ENCODE measurements at regions of chr15 and their contacts with region 1.

Region 1: GRCh38 chr15:67076147-67076843 is 10.9 kb downstream of the SMAD3 start:
- DNase-seq: peak; percentile 95
- H3K4me3 ChIP-seq: no peak overlapping the region
- H3K27ac ChIP-seq: peak overlapping the region; percentile 76
- H3K4me1 ChIP-seq: peaks cover 72% of the 10 kb centered on the region
- H3K27me3 ChIP-seq: no peaks in the 10 kb centered on the region
- CTCF ChIP-seq: no peak
- POLR2A ChIP-seq: no peak

Region 2: DNA sequence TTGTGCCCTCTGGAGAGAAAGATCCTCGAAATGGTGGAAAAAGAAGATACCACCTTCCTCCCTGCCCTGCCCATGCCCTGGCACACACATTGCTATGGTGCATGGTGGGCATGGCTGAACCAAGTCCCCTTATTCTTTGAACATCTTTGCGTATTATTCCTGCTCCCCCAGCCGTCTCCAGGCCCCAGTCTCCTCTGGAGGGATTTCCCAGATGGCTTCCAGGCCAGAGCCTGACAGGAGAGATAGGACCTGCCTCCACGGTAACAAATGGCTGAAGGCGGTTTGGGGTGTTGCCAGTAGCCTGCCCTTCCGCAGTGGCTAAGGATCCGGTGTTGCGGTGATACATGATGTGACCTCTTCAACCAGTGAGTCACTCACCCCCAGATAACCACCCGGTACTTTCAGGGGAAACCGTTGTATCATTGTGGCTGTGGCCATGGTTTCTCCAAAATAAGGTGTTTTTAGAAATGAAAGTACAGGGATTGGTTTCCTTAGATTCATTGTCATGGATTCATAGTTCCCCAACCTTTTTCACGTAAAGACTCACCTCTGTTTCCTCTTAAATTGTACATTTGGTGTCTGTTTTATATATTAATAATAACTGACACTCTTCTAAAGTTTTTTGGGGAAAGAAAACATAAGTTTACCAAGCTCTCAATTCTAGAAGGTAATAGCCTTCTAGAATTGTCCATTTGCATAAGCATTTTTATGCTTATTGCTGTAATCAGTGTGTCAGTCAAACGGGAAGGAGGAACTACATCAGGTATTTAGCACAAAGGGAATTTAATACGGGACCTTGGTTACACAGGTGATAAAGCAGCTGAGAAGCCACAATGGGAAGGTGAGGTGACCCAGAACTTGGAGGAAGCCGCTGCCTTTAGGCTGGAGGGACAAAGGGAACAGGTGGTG is 15.0 kb after region 1 on chr15:
- CTCF ChIA-PET with region 1: interaction called, 4 read pairs
- POLR2A ChIA-PET with region 1: no interaction called
- dilution Hi-C with region 1: no loop called
- intact Hi-C with region 1: loop called (anchors 1 kb)
- DNase-seq: peak; percentile 99
- H3K4me3 ChIP-seq: peak overlapping the region in 1 of 3 experiments; percentile 2
- H3K27ac ChIP-seq: peak overlapping the region; percentile 99
- H3K4me1 ChIP-seq: peaks cover 57% of the 10 kb centered on the region
- H3K27me3 ChIP-seq: no peaks in the 10 kb centered on the region
- CTCF ChIP-seq: no peak
- POLR2A ChIP-seq: peak; percentile 61

Region 3: DNA sequence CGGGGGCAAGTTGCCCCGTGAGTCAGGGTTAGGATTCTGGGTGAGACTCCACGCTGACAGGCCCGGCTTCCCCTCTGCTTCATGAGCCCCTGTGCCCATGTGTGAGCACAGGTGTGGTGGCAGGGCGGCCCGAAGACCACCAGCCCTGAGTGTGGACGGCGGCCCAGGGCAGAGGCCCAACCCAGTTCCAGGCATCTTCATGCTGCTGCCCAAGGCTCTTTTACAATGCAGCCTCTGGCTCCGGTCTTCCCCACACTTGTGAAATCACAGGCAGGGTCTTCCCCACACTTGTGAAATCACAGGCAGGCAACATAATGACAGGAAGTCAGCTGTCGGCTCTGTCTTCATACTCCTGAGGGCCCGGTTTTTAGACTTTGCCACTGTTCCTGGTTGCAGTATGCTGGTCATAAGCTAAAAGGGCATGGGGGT is 99.4 kb after region 1 on chr15:
- CTCF ChIA-PET with region 1: no interaction called
- POLR2A ChIA-PET with region 1: no interaction called
- dilution Hi-C with region 1: no loop called
- intact Hi-C with region 1: loop called (anchors 1 kb)
- DNase-seq: peak; percentile 54
- H3K4me3 ChIP-seq: no peak overlapping the region
- H3K27ac ChIP-seq: peak overlapping the region; percentile 87
- H3K4me1 ChIP-seq: peaks cover 56% of the 10 kb centered on the region
- H3K27me3 ChIP-seq: no peaks in the 10 kb centered on the region
- CTCF ChIP-seq: no peak
- POLR2A ChIP-seq: no peak

Region 4: GRCh38 chr15:67202991-67203390 is 126.7 kb after region 1 on chr15:
- CTCF ChIA-PET with region 1: no interaction called
- POLR2A ChIA-PET with region 1: no interaction called
- dilution Hi-C with region 1: no loop called
- intact Hi-C with region 1: no loop called
- DNase-seq: peak; percentile 49
- H3K4me3 ChIP-seq: no peak overlapping the region
- H3K27ac ChIP-seq: no peak overlapping the region
- H3K4me1 ChIP-seq: peaks cover 20% of the 10 kb centered on the region
- H3K27me3 ChIP-seq: no peaks in the 10 kb centered on the region
- CTCF ChIP-seq: no peak
- POLR2A ChIP-seq: no peak